OCI-LY7 (cell line): ENCODE measurements at regions of chr15 and their contacts with region 1.

Region 1: DNA sequence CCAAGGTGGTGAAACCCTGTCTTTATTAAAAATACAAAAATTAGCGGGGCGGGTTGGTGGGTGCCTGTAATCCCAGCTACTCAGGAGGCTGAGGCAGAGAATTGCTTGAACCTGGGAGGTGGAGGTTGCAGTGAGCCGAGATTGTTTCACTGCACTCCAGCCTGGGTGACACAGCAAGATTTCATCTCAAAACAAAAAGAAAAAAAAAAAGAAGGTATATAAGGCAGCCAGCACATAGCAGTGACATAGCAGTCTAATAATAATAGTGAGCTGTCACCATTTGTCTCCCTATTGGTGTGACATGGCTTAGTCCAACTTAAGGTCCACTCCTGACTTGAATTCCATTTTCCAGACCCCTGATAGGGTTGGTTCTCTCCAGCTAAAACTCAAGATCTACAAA is 8.8 kb upstream of the LACTB start:
- DNase-seq: no peak
- H3K4me3 ChIP-seq: no peak overlapping the region
- H3K27ac ChIP-seq: no peak overlapping the region
- H3K4me1 ChIP-seq: no peaks in the 10 kb centered on the region
- CTCF ChIP-seq: no peak

Region 2: GRCh38 chr15:62572797-62573196 is 540.1 kb before region 1 on chr15:
- CTCF ChIA-PET with region 1: no interaction called
- POLR2A ChIA-PET with region 1: interaction called, 11 read pairs
- intact Hi-C with region 1: no loop called
- DNase-seq: no peak
- H3K4me3 ChIP-seq: no peak overlapping the region
- H3K27ac ChIP-seq: no peak overlapping the region
- H3K4me1 ChIP-seq: peaks cover 37% of the 10 kb centered on the region
- CTCF ChIP-seq: no peak

Region 3: GRCh38 chr15:62958528-62959363 is 154.1 kb before region 1 on chr15:
- CTCF ChIA-PET with region 1: no interaction called
- POLR2A ChIA-PET with region 1: no interaction called
- intact Hi-C with region 1: no loop called
- DNase-seq: no peak
- H3K4me3 ChIP-seq: no peak overlapping the region
- H3K27ac ChIP-seq: no peak overlapping the region
- H3K4me1 ChIP-seq: no peaks in the 10 kb centered on the region
- CTCF ChIP-seq: no peak